Psoas muscle (tissue), 8 donors: ENCODE measurements at regions of chr20 and their contacts with region 1.

Region 1: GRCh38 chr20:3786665-3787323 is at the start of gene CENPB:
- DNase-seq: peak; percentile 94
- ATAC-seq: peak; percentile 95 to 96 (median 96)
- H3K4me3 ChIP-seq: peak within 1 kb of the TSS; percentile 79
- H3K27ac ChIP-seq: peak within 1 kb of the TSS; percentile 82
- H3K4me1 ChIP-seq: peaks cover 29% of the 10 kb centered on the region
- H3K27me3 ChIP-seq: no peaks in the 10 kb centered on the region
- CTCF ChIP-seq: peak; percentile 86
- total RNA-seq, gene CENPB: 74.3 to 129 (median 97.8) TPM

Region 2: DNA sequence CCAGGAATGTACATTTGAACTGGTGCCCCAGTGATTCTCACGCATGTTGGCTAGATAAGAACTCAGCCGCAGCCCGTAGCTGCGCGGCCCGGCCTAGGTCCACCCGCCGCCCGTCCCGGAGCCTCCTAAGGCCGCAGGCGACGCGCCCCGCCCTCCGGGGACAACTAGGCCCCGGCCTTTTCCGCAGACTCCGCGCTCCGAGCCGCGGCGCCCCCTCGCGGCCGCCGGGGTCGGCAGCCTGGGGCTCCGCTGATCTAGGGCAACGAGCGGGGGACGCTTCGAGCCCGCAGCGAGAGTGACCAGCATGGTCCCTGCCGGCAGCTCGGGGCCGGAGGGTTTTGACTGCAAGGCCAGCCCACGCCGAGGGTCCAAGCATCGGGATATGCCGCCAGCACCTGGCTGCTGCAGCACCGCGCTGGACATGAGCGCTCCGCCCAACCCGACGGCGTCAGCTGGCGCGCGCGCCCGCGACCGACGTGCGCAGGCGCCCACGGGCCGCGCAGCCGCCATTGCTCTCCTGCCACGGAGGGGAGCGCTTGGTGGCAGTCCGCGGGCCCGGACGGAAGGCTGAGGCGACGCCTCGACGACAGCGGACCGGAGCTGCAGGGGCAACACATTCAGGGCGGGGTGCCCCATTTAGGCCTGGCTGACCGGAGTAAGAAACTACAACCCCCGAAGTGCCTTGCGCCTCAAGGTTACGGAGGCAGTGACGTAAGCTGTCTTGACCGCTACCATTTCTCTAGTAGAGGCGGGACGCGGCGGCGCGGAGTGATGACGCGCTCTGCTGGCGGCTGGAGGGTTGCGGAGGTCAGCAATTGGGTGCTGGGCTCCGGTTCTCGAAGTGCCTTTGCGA is 33.5 kb after region 1 on chr20 and contains the start of gene AP5S1:
- intact Hi-C with region 1: loop called (anchors 1 to 5 kb)
- DNase-seq: peak; percentile 97 to 98
- ATAC-seq: peak; percentile 89 to 92 (median 90)
- H3K4me3 ChIP-seq: peak within 1 kb of the TSS; percentile 83
- H3K27ac ChIP-seq: peak within 1 kb of the TSS; percentile 96
- H3K4me1 ChIP-seq: peaks cover 13% of the 10 kb centered on the region
- H3K27me3 ChIP-seq: no peaks in the 10 kb centered on the region
- CTCF ChIP-seq: peak; percentile 99
- total RNA-seq, gene AP5S1: 11.8 to 17.5 (median 12.1) TPM

Region 3: GRCh38 chr20:3846740-3847428 is 60.1 kb after region 1 on chr20 and contains the start of gene MAVS:
- intact Hi-C with region 1: loop called in 1 of 2 experiments (anchors 2 kb)
- DNase-seq: peak; percentile 90 to 95
- ATAC-seq: peak; percentile 96 to 98 (median 98)
- H3K4me3 ChIP-seq: peak within 1 kb of the TSS; percentile 100
- H3K27ac ChIP-seq: peak within 1 kb of the TSS; percentile 90
- H3K4me1 ChIP-seq: no peaks in the 10 kb centered on the region
- H3K27me3 ChIP-seq: no peaks in the 10 kb centered on the region
- CTCF ChIP-seq: no peak
- total RNA-seq, gene MAVS: 49.7 to 61.3 (median 50.7) TPM

Region 4: DNA sequence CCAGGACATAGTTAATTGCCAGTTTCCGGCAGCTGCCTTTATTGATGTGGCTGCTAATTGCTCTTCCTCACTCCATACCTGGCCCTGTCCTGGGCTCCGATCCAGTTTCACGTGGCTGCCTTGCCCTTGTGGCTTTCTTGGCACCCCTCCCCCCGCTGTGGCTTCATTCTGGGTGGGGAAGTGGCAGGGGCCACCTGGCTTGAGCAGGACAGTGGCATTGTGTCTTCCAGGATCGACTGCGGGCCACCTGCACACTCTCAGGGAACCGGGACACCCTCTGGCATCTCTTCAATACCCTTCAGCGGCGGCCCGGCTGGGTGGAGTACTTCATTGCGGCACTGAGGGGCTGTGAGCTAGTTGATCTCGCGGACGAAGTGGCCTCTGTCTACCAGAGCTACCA is 70.6 kb after region 1 on chr20:
- intact Hi-C with region 1: loop called in 1 of 2 experiments (anchors 5 kb)
- DNase-seq: no peak
- ATAC-seq: peak in 1 of 4 donors; percentile 25
- H3K4me3 ChIP-seq: no peak overlapping the region
- H3K27ac ChIP-seq: no peak overlapping the region
- H3K4me1 ChIP-seq: no peaks in the 10 kb centered on the region
- H3K27me3 ChIP-seq: no peaks in the 10 kb centered on the region
- CTCF ChIP-seq: no peak

Region 5: DNA sequence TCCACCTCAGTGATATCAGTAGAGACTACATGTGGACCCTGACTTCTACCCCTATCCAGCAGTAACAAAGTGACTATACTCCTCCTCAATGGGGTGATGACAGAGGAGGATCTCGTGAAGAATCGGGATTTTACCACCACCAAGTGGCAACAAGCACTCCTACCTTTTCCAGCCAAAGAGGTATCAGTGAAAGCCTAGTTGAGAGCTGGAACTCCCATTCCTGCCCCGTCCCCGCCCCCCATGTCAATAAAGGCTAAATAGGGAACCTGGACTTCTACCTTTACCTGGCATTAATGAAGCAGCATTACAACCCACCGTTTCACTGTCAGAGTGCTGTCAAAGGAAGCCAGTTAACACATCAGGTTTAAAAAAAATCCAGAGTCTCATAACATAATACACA is 183.2 kb after region 1 on chr20:
- intact Hi-C with region 1: no loop called
- DNase-seq: no peak
- ATAC-seq: no peak
- H3K4me3 ChIP-seq: no peak overlapping the region
- H3K27ac ChIP-seq: no peak overlapping the region
- H3K4me1 ChIP-seq: no peaks in the 10 kb centered on the region
- H3K27me3 ChIP-seq: no peaks in the 10 kb centered on the region
- CTCF ChIP-seq: no peak

Region 6: DNA sequence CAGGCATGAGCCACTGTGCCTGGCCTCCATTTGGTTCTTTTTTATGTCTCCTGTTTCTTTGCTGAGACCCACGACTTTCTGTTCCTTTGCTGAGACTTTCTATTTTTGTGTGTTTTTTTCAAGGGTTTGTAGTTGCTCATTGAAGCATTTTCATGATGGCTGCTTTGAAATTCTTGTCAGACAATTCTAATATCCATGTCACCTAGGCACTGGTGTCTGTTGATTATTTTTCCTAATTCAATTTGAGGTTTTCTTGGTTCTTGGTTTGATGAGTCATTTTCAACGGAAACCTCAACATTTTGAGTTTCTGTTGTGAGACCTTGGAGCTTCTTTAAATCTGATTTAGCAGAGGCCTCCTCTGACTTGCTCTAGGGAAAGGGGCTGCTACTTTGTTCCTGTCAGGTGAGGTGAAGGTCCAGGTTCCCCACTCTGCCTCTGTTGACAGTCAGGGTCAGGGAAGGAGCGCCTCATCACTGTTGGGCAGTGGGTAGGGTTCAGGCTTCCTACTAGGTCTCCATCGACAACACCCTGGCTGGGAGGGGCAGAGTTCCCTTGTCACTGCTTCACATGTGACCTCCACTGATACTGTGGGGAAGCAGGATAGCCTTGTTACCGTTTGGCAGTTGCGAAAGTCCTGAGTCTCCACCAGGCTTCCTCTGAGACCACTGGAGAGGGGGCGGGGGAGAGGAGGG is 295.8 kb after region 1 on chr20:
- intact Hi-C with region 1: loop called (anchors 5 to 10 kb)
- DNase-seq: peak in 1 of 2 donors; percentile 69
- ATAC-seq: no peak
- H3K4me3 ChIP-seq: no peak overlapping the region
- H3K27ac ChIP-seq: no peak overlapping the region
- H3K4me1 ChIP-seq: peaks cover 3% of the 10 kb centered on the region
- H3K27me3 ChIP-seq: peaks cover 0 to 1% (median 0%) of the 10 kb centered on the region in 3 donors
- CTCF ChIP-seq: no peak

Region 7: DNA sequence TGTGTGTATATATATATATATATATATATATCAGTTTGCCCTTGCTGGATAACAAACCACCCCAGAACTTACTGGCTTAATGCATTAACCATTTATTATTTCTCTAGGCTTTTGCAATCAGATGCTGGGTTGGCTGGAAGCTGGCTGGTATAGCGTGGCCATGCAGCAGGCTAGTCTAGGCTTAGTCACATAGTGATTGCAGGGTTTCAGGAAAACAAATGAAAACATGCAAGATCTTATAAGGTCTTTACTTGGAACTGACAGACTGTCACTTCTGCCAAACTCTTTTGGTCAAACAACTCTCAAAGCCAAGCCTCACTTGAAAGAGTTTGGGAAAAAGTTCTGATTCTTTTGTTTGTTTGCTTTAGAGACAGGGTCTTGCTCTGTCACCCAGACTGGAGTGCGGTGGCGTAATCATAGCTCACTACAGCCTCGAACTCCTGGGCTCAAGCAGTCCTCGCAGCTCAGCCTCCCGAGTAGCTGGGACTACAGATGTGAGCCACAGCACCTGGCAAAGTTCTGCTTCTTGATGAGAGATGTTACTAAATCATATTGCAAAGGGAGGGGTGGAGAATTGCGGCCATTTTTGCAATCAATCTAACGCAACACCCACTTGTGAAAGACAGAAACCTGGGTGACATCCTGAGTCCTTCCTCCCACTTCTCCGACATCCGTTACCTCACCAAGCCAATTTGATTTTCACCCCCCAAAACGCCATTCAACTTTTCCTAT is 303.1 kb after region 1 on chr20:
- intact Hi-C with region 1: loop called (anchors 5 to 10 kb)
- DNase-seq: no peak
- ATAC-seq: no peak
- H3K4me3 ChIP-seq: no peak overlapping the region
- H3K27ac ChIP-seq: no peak overlapping the region
- H3K4me1 ChIP-seq: peaks cover 3% of the 10 kb centered on the region
- H3K27me3 ChIP-seq: no peaks in the 10 kb centered on the region
- CTCF ChIP-seq: no peak